Stomach (tissue), 19 donors: ENCODE measurements at regions of chr13 and their contacts with region 1.

Region 1: DNA sequence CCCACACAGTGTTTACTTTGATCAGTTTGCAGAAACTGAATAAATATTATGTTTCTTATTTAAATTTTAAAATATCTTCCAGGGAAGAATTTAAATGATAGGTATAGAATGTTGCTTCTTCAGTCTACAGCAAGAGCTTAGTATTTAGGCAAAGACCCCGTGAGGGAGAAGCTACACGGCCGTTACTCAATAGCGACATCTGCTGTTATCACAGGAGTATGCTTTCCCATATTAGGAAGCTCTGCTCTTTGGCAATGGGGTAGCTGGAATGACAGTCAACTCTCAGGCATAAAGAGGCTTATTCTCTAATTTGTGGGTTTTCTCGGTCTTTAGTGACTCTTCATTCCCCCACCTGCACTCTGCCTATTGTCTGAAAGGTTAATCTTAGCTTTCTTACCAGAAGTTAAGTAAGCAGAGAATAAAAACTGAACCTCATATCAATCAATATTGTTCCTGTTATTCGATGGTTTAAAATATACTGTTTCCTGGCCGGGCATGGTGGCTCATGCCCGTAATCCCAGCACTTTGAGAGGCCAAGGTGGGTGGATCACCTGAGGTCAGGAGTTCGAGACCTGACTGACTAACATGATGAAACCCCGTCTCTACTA is 13.2 kb upstream of the LHFPL6 start:
- DNase-seq: peak in 1 of 2 donors; percentile 89
- H3K4me3 ChIP-seq: no peak overlapping the region
- H3K27ac ChIP-seq: no peak overlapping the region
- H3K4me1 ChIP-seq: peaks cover 0 to 5% (median 2%) of the 10 kb centered on the region in 4 donors
- H3K27me3 ChIP-seq: peaks cover 0 to 4% (median 0%) of the 10 kb centered on the region in 3 donors
- CTCF ChIP-seq: peak in 5 of 7 experiments; percentile 27 to 80 (median 76)
- EP300 ChIP-seq: no peak
- POLR2A ChIP-seq: no peak

Region 2: DNA sequence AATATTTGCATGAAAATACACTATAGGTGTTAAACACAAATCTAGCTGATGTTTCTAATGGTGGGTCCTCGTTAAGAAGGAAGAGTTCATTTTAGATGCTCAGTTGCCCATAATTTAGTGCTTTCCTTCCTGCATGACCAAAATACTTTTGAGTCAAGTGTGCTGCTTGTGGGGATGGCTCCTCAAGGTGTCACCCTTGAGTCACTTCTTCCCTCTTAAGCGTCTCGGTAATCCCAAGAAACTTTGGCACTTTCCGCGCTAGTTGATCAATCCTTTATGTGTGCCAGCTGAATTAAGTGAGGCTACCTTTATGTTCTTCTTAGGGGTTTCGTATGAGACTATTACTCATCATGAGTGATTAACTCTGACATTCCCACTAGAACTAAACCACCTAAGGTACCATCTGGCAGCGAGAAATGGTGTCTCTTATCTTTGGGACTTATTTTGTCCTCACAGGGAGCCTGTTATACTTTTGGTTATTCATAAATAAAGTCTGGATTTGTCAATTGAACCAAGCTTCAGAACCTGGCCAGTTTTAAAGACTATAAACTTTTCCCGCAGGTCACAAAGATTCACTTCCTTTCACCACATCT is 471.2 kb before region 1 on chr13:
- intact Hi-C with region 1: loop called (anchors 10 kb)
- DNase-seq: peak; percentile 33 to 88
- H3K4me3 ChIP-seq: no peak overlapping the region
- H3K27ac ChIP-seq: no peak overlapping the region
- H3K4me1 ChIP-seq: peaks cover 0 to 5% (median 2%) of the 10 kb centered on the region in 4 donors
- H3K27me3 ChIP-seq: no peaks in the 10 kb centered on the region
- CTCF ChIP-seq: peak in 5 of 7 experiments; percentile 21 to 62 (median 44)
- EP300 ChIP-seq: no peak
- POLR2A ChIP-seq: no peak

Region 3: DNA sequence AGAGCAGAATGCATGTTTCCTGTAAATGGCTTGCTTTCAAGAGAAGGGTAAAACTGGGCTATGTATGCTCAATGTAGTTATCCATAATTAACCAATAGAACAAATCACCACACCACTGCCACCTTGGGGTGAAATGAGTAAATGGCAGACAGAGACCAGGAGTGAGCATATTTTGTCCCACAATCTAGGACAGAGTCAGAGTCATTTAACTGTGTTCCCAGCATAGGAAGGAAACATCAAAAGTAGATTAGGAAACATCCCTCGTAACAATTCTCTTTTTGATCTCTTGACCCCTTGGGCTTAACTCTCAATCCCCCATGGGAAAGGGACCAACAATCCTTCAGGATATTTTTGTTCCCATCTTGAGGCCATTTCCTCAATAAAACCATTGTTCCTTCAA is 353.2 kb before region 1 on chr13:
- intact Hi-C with region 1: loop called (anchors 10 kb)
- DNase-seq: peak; percentile 27 to 73
- H3K4me3 ChIP-seq: no peak overlapping the region
- H3K27ac ChIP-seq: no peak overlapping the region
- H3K4me1 ChIP-seq: no peaks in the 10 kb centered on the region
- H3K27me3 ChIP-seq: no peaks in the 10 kb centered on the region
- CTCF ChIP-seq: peak in 5 of 7 experiments; percentile 33 to 47 (median 40)
- EP300 ChIP-seq: no peak
- POLR2A ChIP-seq: no peak

Region 4: DNA sequence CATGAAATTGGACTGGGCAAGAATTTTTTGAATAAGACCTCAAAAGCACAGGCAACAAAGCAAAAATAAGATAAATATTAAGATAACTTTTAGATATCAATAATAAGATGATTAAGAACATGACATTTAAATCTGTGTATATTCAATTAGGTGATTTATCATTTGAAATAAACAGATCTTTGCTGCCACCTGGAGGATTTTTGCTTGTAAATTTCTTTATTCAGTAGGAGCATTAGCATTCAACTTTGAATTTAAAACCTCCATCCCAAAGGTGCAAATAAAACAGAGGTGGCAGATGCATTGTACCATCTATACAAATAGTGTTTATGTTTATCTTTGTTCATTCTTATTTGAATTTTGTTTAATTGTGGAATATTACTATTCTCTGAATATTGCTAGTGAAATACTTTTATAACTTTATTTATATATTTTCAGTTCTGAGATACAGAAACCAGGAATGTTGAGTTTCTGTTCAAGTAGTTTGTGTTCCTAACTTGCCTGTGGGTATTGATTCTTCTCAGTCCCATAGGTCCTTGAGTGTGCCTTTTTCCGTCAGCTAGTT is 60.2 kb after region 1 on chr13:
- intact Hi-C with region 1: no loop called
- DNase-seq: peak in 1 of 2 donors; percentile 71
- H3K4me3 ChIP-seq: no peak overlapping the region
- H3K27ac ChIP-seq: no peak overlapping the region
- H3K4me1 ChIP-seq: peaks cover 0 to 9% (median 0%) of the 10 kb centered on the region in 4 donors
- H3K27me3 ChIP-seq: no peaks in the 10 kb centered on the region
- CTCF ChIP-seq: peak in 3 of 7 experiments; percentile 30 to 43 (median 39)
- EP300 ChIP-seq: no peak
- POLR2A ChIP-seq: no peak

Region 5: DNA sequence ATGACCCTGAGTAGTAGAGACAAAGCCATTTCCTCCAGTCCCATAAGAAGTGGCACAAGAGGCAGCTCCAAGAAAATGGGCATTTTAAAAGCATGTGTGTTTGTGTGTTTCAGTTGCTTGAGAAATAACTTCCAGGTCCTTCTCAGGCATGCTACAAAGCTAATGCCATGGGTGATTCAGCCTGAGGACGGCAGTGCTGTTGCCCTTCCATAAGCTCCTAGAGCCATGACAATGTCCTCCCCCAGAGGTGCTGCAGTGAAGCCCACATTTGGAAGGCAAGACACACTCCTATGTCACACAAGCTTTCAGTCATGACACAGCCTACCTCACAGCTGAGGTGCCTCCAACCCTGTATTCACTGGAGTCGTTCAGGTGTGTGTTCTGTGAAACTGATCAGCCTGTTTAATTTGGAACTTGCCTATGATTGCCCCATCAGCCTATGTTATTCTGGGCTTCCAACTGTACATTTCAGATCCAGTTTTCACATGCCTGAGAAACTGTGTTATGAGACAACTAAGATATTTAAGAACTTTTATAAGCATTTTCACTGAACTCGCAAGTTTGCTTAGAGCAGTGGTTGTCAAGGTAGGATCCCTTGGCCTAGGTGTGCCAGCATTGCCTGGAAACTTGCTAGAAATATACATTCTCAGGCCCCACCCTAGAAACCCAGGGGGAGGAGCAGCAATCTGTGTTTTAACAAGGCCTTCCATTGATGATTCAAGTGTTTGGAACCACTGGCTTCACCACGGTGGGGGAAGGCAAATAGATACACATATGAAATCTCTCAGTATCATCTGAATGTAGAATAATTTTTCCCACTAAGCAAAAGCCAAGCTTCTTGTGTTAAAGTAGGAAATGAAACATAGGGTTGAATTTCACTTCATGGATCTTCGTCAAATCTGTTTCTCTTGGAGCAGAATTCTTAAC is 836.8 kb after region 1 on chr13:
- intact Hi-C with region 1: no loop called
- DNase-seq: no peak
- H3K4me3 ChIP-seq: no peak overlapping the region
- H3K27ac ChIP-seq: no peak overlapping the region
- H3K4me1 ChIP-seq: no peaks in the 10 kb centered on the region
- H3K27me3 ChIP-seq: no peaks in the 10 kb centered on the region
- CTCF ChIP-seq: no peak
- EP300 ChIP-seq: no peak
- POLR2A ChIP-seq: no peak

Region 6: GRCh38 chr13:40682449-40683240 is 1066.5 kb after region 1 on chr13:
- intact Hi-C with region 1: no loop called
- DNase-seq: peak in 1 of 2 donors; percentile 36
- H3K4me3 ChIP-seq: no peak overlapping the region
- H3K27ac ChIP-seq: no peak overlapping the region
- H3K4me1 ChIP-seq: peaks cover 0 to 21% (median 6%) of the 10 kb centered on the region in 4 donors
- H3K27me3 ChIP-seq: no peaks in the 10 kb centered on the region
- CTCF ChIP-seq: peak in 5 of 7 experiments; percentile 37 to 81 (median 42)
- EP300 ChIP-seq: no peak
- POLR2A ChIP-seq: no peak